Pancreas (tissue), 10 donors: ENCODE measurements at regions of chr4 and their contacts with region 1.

Region 1: GRCh38 chr4:153785910-153786721 is 2.8 kb downstream of the SFRP2 start:
- DNase-seq: no peak
- ATAC-seq: peak in 3 of 4 donors; percentile 29 to 57 (median 54)
- H3K4me3 ChIP-seq: no peak overlapping the region
- H3K27ac ChIP-seq: no peak overlapping the region
- H3K4me1 ChIP-seq: peaks cover 0 to 5% (median 3%) of the 10 kb centered on the region in 3 donors
- H3K27me3 ChIP-seq: peaks cover 0 to 33% (median 5%) of the 10 kb centered on the region in 4 donors
- CTCF ChIP-seq: no peak

Region 2: GRCh38 chr4:154107337-154107736 is 321.2 kb after region 1 on chr4:
- intact Hi-C with region 1: no loop called
- DNase-seq: no peak
- ATAC-seq: no peak
- H3K4me3 ChIP-seq: no peak overlapping the region
- H3K27ac ChIP-seq: no peak overlapping the region
- H3K4me1 ChIP-seq: no peaks in the 10 kb centered on the region
- H3K27me3 ChIP-seq: no peaks in the 10 kb centered on the region
- CTCF ChIP-seq: no peak

Region 3: DNA sequence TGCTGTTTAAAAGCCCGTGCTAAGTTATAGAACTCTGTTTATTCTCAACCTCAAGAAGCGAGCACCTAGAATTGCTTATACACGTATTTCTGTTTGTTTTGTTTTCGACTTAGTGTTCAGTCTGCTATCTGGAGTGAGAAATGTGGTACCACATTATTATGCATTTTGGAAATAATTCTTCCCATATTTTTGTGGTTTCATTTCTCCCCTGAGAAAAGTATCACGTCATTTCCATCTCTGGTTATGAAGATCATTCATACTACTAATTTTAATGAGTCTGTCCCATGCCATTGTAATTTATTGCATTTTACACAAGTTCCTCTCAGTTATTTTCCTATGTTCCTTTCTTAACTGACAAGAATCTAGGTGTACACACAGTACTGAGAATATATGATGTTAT is 519.5 kb after region 1 on chr4:
- intact Hi-C with region 1: loop called in 1 of 3 experiments (anchors 10 kb)
- DNase-seq: no peak
- ATAC-seq: no peak
- H3K4me3 ChIP-seq: no peak overlapping the region
- H3K27ac ChIP-seq: no peak overlapping the region
- H3K4me1 ChIP-seq: no peaks in the 10 kb centered on the region
- H3K27me3 ChIP-seq: no peaks in the 10 kb centered on the region
- CTCF ChIP-seq: no peak

Region 4: GRCh38 chr4:154329268-154329868 is 543.3 kb after region 1 on chr4:
- intact Hi-C with region 1: loop called in 1 of 3 experiments (anchors 10 kb)
- DNase-seq: no peak
- ATAC-seq: peak in 3 of 4 donors; percentile 50 to 63 (median 52)
- H3K4me3 ChIP-seq: no peak overlapping the region
- H3K27ac ChIP-seq: no peak overlapping the region
- H3K4me1 ChIP-seq: no peaks in the 10 kb centered on the region
- H3K27me3 ChIP-seq: peaks cover 0 to 26% (median 6%) of the 10 kb centered on the region in 4 donors
- CTCF ChIP-seq: peak in 1 of 4 donors; percentile 12

Region 5: DNA sequence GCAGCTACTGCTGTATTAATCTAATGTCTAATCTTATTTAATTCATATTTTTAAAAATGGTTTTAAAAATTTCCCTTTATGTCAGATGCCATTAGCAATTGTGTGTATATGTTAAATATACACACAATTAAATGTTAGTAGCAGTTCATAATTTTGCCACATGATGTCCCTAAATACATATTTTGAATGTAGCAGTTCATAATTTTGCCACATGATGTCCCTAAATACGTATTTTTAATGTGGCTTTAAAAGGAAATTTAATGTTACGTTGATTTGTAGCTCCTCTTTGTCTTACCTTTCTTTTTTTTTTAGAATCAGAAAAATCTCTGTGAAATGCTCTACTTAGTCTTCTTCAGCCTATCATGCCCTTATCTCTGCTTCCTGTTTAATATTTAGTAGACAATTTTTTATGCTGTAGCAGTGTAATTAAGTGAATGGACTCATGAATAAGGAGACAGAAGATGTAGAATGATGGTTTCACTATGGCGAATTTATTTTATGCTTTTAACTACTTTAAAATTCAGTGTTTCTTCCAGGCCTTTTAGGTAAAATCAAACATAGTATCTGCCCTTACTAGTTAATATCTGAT is 1021.0 kb after region 1 on chr4:
- intact Hi-C with region 1: no loop called
- DNase-seq: no peak
- ATAC-seq: peak in 3 of 4 donors; percentile 68 to 70 (median 69)
- H3K4me3 ChIP-seq: no peak overlapping the region
- H3K27ac ChIP-seq: no peak overlapping the region
- H3K4me1 ChIP-seq: no peaks in the 10 kb centered on the region
- H3K27me3 ChIP-seq: no peaks in the 10 kb centered on the region
- CTCF ChIP-seq: peak in 3 of 4 donors; percentile 44 to 48 (median 45)